ENCODE measurements at regions of chr2 and their contacts with region 1.

Region 1: DNA sequence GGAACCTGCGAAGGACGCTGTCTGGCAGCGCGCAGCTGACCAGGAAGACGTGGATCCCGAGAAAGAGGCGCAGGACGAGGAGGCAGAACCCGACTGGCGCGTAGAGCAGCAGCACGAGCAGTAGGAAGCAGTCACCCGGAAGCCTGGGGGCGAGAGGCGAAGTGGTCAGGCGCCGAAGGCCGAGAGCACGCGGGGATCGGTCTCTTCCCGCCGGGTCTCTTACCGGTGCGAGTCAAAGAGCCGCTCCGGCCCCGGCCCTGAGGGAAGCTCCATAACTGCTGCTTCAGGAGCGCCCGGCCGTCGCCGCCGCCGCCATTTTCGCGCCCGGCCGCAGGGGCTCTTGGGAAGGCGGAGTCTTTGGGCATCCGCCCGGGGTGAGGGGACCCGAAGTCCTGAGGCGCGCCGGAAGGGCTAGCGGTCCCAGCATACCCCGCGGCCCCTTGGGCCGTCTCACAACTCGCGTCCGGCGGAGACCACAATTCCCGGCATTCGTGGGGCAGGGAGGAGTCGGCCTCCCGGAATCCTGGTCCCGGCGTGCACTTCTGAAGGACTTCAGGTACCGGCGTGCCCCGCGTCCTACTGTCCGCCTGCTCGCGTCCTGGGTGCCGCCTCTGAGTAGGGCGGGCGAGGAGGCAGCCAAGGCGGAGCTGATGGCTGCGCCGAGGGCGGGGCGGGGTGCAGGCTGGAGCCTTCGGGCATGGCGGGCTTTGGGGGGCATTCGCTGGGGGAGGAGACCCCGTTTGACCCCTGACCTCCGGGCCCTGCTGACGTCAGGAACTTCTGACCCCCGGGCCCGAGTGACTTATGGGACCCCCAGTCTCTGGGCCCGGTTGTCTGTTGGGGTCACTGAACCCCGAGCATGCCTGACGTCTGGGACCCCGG is at the starts of genes AUP1 and HTRA2:
- DNase-seq: peak; percentile 93
- H3K4me3 Mint-ChIP-seq: peak within 1 kb of the TSS; percentile 99
- H3K27ac Mint-ChIP-seq: peak within 1 kb of the TSS; percentile 96
- H3K4me1 Mint-ChIP-seq: peaks cover 41% of the 10 kb centered on the region
- H3K27me3 Mint-ChIP-seq: no peaks in the 10 kb centered on the region
- total RNA-seq, gene AUP1: 155 TPM in 2 replicates
- total RNA-seq, gene HTRA2: 61.5 and 64.1 TPM in 2 replicates

Region 2: GRCh38 chr2:74482801-74483674 is 46.6 kb before region 1 on chr2 and contains the starts of genes CCDC142 and TTC31:
- intact Hi-C with region 1: loop called (anchors 1 kb)
- DNase-seq: peak; percentile 91
- H3K4me3 Mint-ChIP-seq: peak within 1 kb of the TSS; percentile 99
- H3K27ac Mint-ChIP-seq: peak within 1 kb of the TSS; percentile 99
- H3K4me1 Mint-ChIP-seq: peaks cover 26% of the 10 kb centered on the region
- H3K27me3 Mint-ChIP-seq: no peaks in the 10 kb centered on the region
- total RNA-seq, gene CCDC142: 25.1 and 26.9 TPM in 2 replicates
- total RNA-seq, gene TTC31: 35.1 and 35.9 TPM in 2 replicates

Region 3: DNA sequence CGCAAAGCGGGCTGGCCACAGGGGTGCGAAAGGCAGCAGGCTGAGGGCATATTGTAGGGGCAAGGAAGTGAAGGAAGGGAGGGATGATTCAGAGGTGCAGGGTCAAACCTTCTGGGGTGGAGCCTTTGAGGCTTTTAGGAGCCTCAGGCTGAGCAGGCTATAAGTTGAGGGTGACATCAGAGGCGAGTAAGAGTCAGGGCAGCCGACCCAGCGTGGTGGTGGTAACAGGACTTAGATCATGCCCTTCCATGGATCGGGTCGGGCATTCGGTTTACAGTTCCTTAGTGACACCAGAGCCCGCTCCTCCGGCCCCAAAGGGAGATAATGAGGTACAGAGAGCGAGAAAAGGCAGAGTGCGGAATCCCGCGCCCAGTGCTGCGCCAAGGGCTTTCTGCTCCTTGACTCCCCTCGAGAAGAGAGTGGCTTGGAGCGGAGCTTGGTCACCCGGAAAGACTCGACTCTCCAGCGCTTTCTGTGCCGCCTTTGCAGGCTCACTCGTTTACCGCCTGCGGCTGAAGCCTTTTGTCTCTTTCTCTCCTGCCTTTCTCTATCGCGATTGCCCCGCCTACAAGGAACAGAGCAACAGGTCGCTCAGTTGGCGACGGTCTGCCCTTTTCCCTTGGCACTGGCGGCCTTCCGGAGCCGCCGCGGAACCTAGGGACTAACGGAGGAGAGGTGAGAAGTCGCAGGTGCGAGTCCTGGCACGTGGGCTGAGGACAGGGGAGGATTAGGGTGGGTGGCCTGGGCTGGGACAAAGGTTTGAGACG is 30.9 kb before region 1 on chr2:
- intact Hi-C with region 1: loop called (anchors 5 kb)
- DNase-seq: no peak
- H3K4me3 Mint-ChIP-seq: peak overlapping the region; percentile 86
- H3K27ac Mint-ChIP-seq: peak overlapping the region; percentile 72
- H3K4me1 Mint-ChIP-seq: peaks cover 31% of the 10 kb centered on the region
- H3K27me3 Mint-ChIP-seq: peaks cover 30% of the 10 kb centered on the region

Region 4: GRCh38 chr2:74507145-74507925 is 22.3 kb before region 1 on chr2 and contains the start of gene PCGF1:
- intact Hi-C with region 1: loop called (anchors 1 kb)
- DNase-seq: peak; percentile 96
- H3K4me3 Mint-ChIP-seq: peak within 1 kb of the TSS; percentile 97
- H3K27ac Mint-ChIP-seq: peak within 1 kb of the TSS; percentile 100
- H3K4me1 Mint-ChIP-seq: peaks cover 52% of the 10 kb centered on the region
- H3K27me3 Mint-ChIP-seq: peaks cover 24% of the 10 kb centered on the region
- total RNA-seq, gene PCGF1: 36.5 and 39.7 TPM in 2 replicates

Region 5: DNA sequence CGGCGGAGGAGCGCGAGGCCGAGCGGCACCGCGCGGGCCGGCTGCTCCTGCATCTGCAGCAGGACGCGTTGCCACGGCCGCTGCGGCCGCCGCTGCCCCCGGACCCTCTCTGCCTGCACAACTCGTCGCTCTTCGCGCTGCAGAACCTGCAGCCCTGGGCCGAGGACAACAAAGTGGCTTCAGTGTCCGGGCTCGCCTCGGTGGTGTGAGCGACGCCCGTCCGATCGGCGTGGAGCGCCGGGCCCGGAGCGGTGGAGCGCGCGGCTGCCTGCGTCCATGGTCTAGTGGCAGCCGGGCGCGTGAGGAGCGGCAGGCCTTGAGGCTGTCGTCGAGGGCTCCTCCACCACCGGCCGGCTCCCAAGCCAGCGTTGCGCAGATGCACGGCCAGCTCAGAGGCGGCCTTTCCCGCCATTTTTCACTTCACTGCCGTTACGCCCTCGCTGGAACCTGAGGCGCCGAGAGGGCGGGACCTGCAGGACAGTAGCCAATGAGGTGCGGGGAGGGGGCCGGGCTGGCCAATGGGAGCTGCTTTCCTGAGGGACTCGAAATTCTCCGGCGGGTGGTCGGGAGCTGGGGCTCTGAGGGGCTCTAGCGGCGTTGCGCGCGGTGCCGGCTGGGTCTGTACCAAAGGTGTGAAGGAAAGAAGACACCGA is 13.5 kb before region 1 on chr2:
- intact Hi-C with region 1: loop called (anchors 2 kb)
- DNase-seq: peak; percentile 65
- H3K4me3 Mint-ChIP-seq: peak overlapping the region; percentile 68
- H3K27ac Mint-ChIP-seq: no peak overlapping the region
- H3K4me1 Mint-ChIP-seq: peaks cover 15% of the 10 kb centered on the region
- H3K27me3 Mint-ChIP-seq: peaks cover 60% of the 10 kb centered on the region

Region 6: GRCh38 chr2:74553892-74554645 is 24.5 kb after region 1 on chr2 and contains the start of gene LOXL3:
- intact Hi-C with region 1: loop called (anchors 1 kb)
- DNase-seq: peak; percentile 80
- H3K4me3 Mint-ChIP-seq: peak within 1 kb of the TSS; percentile 97
- H3K27ac Mint-ChIP-seq: peak within 1 kb of the TSS; percentile 96
- H3K4me1 Mint-ChIP-seq: peaks cover 32% of the 10 kb centered on the region
- H3K27me3 Mint-ChIP-seq: no peaks in the 10 kb centered on the region
- total RNA-seq, gene LOXL3: 1.7 and 2.1 TPM in 2 replicates

Region 7: DNA sequence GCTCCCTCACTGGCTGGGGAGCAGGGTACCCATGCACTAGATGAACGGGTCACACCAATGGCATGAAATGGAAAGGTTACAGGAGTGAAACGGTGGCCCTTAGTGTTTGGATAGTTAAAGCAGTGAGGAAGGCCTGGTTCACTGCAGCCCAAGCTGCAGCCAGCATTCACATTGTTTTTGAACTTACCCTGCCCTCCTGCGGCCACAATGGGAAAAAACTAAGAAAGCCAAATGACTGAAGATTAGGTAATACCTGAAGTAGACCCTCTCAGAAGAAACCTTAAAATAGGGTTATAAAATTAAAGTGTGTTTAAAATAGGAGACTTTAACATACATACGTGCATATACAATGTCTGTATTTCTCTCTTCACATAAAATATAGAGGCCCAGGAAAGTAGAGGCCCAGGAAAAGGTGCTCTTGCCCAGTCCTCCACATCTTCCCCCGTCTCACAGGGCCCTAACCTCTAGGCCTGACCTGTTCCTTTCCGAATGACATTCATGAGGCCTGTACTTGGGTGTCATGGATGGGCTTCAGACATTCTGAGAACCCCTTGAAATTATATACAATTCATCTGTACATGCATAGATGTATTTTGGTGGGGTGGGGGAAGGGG is 58.2 kb after region 1 on chr2:
- intact Hi-C with region 1: loop called (anchors 1 kb)
- DNase-seq: peak; percentile 61
- H3K4me3 Mint-ChIP-seq: no peak overlapping the region
- H3K27ac Mint-ChIP-seq: peak overlapping the region; percentile 59
- H3K4me1 Mint-ChIP-seq: peaks cover 35% of the 10 kb centered on the region
- H3K27me3 Mint-ChIP-seq: peaks cover 15% of the 10 kb centered on the region